ENCODE measurements at regions of chr2 and their contacts with region 1.

Region 1: GRCh38 chr2:30165050-30165520 is 18.3 kb downstream of the YPEL5 start:
- DNase-seq: peak; percentile 65
- H3K4me3 Mint-ChIP-seq: no peak overlapping the region
- H3K27ac Mint-ChIP-seq: no peak overlapping the region
- H3K4me1 Mint-ChIP-seq: peaks cover 8% of the 10 kb centered on the region
- H3K27me3 Mint-ChIP-seq: no peaks in the 10 kb centered on the region

Region 2: GRCh38 chr2:30146438-30147147 is 18.5 kb before region 1 on chr2 and contains the start of gene YPEL5:
- intact Hi-C with region 1: loop called (anchors 1 kb)
- DNase-seq: peak; percentile 99
- H3K4me3 Mint-ChIP-seq: peak within 1 kb of the TSS; percentile 77
- H3K27ac Mint-ChIP-seq: peak within 1 kb of the TSS; percentile 92
- H3K4me1 Mint-ChIP-seq: peaks cover 34% of the 10 kb centered on the region
- H3K27me3 Mint-ChIP-seq: no peaks in the 10 kb centered on the region
- total RNA-seq, gene YPEL5: 24.1 and 27.8 TPM in 2 replicates

Region 3: DNA sequence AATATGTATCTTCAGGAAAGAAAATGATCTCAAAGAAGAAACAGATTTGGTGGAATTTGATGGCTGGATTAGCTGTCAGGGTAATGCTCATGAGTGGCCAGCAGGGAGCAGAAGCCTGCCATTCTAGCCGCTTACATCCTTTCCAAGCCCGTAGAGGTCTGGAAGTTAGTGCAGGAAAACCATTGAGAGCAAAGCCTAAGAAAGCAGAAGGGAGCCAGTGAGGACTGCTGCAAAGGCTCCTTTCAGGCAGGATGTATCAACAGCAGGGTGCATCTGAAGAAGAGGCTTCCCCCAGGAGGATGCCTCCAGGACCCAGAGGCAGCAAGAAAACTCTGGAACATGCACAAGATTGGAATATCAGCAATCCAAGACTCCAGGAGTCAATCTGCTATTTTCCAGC is 43.4 kb after region 1 on chr2:
- intact Hi-C with region 1: loop called (anchors 2 kb)
- DNase-seq: no peak
- H3K4me3 Mint-ChIP-seq: no peak overlapping the region
- H3K27ac Mint-ChIP-seq: no peak overlapping the region
- H3K4me1 Mint-ChIP-seq: peaks cover 14% of the 10 kb centered on the region
- H3K27me3 Mint-ChIP-seq: peaks cover 10% of the 10 kb centered on the region

Measured in activated T-helper 2 cell treated with anti-CD3 and anti-CD28 coated beads, Interferon-gamma antibody, Interleukin-2, Interleukin-4, amounts not matched to agents 10 μg/mL and 5 μg/mL and 100 μg/mL, durations not matched to agents 14 hours and 24 hours and 36 hours (primary cell).